MCF 10A (cell line): ENCODE measurements at regions of chr9 and their contacts with region 1.

Region 1: DNA sequence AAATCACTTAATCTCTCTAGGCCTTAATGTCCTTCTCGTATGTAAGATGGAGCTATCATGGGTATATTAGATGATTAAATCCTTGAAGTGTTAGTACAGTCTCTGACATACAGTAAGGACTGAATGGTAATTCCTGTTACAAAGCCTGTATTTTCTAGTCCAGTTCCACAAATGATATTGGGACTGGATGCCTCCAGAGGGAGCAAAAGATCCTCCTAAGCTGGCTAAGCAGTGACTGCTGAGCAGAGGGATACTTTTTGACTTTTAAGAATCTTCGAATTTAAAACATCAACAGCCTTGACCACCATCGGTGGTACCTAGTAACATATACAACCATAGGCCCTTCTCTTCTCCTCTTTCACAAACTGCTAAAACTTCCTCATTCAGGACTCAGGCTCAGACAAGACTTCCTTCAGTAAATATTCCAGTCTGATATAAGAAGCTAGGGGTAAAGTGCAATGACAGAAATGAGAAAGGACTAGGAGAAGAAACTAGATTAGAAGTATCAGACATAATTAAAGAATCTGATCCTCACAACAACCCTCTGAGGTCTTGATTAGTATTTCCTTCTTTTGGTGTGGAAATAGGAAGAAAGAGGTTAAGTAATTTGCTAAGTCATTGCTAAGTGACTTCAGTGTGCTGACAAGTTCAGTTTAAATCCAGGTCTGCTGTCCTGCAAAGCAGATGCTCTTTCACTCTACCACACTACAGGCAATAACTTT is 13.9 kb downstream of the PTAR1 start:
- DNase-seq: no peak
- H3K4me3 Mint-ChIP-seq: no peak overlapping the region
- H3K27ac Mint-ChIP-seq: no peak overlapping the region
- H3K4me1 Mint-ChIP-seq: peaks cover 29% of the 10 kb centered on the region
- H3K27me3 Mint-ChIP-seq: no peaks in the 10 kb centered on the region
- CTCF ChIP-seq: no peak

Region 2: DNA sequence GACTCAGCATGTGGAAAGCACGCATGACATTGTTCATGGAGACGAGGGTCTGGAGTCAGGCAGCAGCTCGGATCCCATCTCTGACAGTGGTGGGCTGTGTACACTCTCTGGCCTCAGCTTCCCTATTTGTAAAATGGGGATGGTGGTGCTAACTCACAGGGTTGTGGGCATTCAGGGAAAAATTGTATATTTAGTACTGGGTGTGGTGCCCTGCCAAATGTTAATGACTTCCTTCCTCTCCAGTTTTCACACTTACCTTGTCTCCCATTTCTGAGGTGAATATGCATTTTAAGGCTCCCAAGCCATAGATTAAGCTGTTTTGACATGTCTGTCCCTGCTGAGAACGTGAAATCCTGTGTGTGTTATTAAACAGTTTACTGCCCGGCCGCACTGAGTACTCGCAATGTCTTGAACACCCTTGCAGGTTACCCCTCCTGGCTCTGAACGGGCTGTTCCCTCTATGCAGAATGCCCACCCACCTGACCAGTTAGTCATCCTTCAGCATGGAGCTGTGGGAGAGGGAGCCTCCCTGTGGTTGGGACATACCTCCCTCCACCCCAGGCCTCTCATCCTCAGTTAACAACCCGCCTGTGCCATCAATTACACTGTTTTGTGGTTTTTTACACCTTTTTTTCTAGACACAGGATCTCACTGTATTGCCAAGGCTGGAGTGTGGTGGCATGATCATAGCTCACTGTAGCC is 546.0 kb before region 1 on chr9:
- CTCF ChIA-PET with region 1: no interaction called
- POLR2A ChIA-PET with region 1: no interaction called
- intact Hi-C with region 1: no loop called
- DNase-seq: peak; percentile 73
- H3K4me3 Mint-ChIP-seq: no peak overlapping the region
- H3K27ac Mint-ChIP-seq: no peak overlapping the region
- H3K4me1 Mint-ChIP-seq: peaks cover 26% of the 10 kb centered on the region
- H3K27me3 Mint-ChIP-seq: no peaks in the 10 kb centered on the region
- CTCF ChIP-seq: no peak

Region 3: DNA sequence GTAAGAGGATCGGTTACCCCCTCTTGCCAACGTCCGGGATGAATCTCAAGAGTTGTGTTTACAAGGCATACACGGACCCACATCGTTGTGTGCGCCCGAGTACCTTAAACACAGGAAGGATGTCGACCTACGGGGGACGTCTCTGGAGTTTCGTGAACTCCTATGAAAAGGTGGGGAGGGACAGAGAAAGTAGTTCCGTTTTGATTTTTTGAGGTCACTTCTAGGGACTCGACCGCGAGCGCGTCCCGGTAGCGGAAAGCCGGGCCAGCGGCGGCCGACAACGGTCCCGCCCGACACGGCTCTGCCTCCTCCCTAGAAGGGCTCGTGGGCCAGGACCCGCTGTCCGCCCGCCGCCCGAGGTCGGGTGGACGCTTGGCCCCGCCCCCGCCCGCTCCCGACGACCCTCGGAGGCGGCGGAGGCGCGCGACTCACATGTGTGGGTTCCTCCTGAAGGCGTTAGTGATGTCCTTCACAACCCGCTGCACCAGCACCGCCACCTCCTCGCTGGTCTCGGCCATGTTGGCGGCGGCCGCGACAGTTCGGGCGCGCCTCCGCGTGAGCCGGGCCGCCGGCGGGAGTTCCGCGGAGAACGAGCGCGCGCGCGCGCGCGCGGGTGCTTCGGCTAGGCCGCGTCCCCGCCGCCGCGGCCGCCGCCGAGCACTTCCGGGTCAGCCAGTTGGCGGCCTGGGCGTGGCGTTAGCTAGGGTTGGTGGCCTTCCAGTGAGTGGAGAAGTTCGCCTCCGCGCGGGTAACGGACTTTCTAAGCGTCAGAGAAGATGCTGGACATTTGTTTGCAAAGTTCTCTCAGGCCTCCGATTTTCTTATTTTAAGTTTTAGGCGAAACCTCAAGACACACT is 13.8 kb after region 1 on chr9 and contains the start of gene PTAR1:
- CTCF ChIA-PET with region 1: interaction called, 4 read pairs
- POLR2A ChIA-PET with region 1: interaction called, 16 read pairs
- intact Hi-C with region 1: no loop called
- DNase-seq: peak; percentile 89
- H3K4me3 Mint-ChIP-seq: peak within 1 kb of the TSS; percentile 89
- H3K27ac Mint-ChIP-seq: peak within 1 kb of the TSS; percentile 73
- H3K4me1 Mint-ChIP-seq: peaks cover 6% of the 10 kb centered on the region
- H3K27me3 Mint-ChIP-seq: no peaks in the 10 kb centered on the region
- CTCF ChIP-seq: no peak
- total RNA-seq, gene PTAR1: 41.4 and 43.5 TPM in 2 replicates

Region 4: GRCh38 chr9:69809304-69809863 is 63.5 kb after region 1 on chr9:
- CTCF ChIA-PET with region 1: no interaction called
- POLR2A ChIA-PET with region 1: no interaction called
- intact Hi-C with region 1: loop called (anchors 10 kb)
- DNase-seq: peak; percentile 40
- H3K4me3 Mint-ChIP-seq: no peak overlapping the region
- H3K27ac Mint-ChIP-seq: no peak overlapping the region
- H3K4me1 Mint-ChIP-seq: no peaks in the 10 kb centered on the region
- H3K27me3 Mint-ChIP-seq: peaks cover 16% of the 10 kb centered on the region
- CTCF ChIP-seq: no peak